Esophagus squamous epithelium (tissue), 5 donors: ENCODE measurements at regions of chr4 and their contacts with region 1.

Region 1: GRCh38 chr4:146916479-146917076 is 29.1 kb downstream of the TTC29 start:
- DNase-seq: no peak
- H3K4me3 ChIP-seq: no peak overlapping the region
- H3K27ac ChIP-seq: no peak overlapping the region
- H3K4me1 ChIP-seq: no peaks in the 10 kb centered on the region
- H3K27me3 ChIP-seq: peaks cover 0 to 7% (median 0%) of the 10 kb centered on the region in 4 donors
- CTCF ChIP-seq: peak in 5 of 6 experiments; percentile 44 to 79 (median 58)
- POLR2A ChIP-seq: no peak

Region 2: GRCh38 chr4:146095091-146095690 is 821.4 kb before region 1 on chr4:
- intact Hi-C with region 1: loop called (anchors 10 kb)
- DNase-seq: no peak
- H3K4me3 ChIP-seq: no peak overlapping the region
- H3K27ac ChIP-seq: no peak overlapping the region
- H3K4me1 ChIP-seq: no peaks in the 10 kb centered on the region
- H3K27me3 ChIP-seq: no peaks in the 10 kb centered on the region
- CTCF ChIP-seq: peak; percentile 30 to 77 (median 60)
- POLR2A ChIP-seq: no peak

Region 3: DNA sequence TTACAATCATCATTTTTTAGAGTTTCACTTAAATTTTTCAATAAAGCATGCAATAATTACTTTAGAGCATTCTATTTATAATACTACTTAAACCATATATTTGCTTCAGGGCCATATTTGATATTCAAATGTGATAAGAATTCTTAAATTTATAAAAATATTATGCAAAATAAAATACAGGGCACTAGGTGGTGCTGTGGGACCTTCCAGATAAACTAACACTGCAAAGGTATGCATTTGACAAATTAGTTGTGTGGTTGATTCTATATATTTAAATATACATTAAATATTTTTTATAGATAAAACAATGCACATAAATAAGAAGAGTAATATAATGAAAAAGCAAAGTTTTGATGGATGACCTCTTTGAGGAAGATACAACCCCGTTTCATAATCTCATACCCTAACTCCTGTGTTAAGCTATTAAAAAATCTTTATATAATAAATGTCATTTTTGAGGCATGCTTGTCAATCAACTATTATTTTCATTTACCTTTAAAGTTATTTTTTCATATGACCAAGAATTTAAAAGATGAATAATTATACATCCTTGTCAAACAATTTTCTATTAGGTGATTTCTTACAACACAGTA is 573.9 kb before region 1 on chr4:
- intact Hi-C with region 1: loop called (anchors 10 kb)
- DNase-seq: no peak
- H3K4me3 ChIP-seq: no peak overlapping the region
- H3K27ac ChIP-seq: no peak overlapping the region
- H3K4me1 ChIP-seq: no peaks in the 10 kb centered on the region
- H3K27me3 ChIP-seq: no peaks in the 10 kb centered on the region
- CTCF ChIP-seq: peak; percentile 17 to 66 (median 40)
- POLR2A ChIP-seq: no peak